ENCODE measurements at regions of chr11 and their contacts with region 1.

Region 1: DNA sequence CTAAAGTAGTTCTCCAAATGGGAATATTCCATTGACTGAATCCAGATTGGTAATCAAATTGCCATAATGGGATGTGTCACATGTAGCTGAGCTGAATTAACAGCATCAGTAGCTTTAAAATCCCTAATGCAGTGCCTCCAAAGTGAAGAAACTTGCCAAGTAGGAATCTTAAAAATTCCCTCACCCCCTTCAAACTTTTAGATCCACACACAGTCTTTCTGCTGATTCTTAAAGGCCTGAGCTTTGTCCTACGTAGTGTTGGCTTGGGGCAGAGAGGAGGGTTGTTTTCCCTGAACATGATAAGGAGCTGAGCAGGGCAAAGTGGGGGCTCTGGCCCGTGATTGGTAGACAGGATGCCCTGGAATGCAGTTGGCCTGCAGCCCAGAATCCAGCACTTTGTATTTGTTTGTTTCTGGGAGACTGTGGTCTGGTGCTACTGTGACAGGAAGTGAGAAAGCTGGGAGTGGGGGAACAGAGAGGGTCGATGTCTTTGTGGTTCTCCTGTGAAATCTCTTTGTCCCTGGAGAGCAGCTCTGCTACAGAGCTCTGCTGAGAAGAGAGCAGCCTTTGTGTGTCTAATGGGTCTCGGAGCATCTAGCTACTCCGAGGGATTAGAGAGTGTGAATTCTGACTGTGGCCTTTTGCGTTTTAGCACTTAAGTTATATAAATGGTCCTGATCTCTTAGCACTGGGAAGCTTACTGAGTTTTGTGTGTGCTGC is 16.9 kb downstream of the CTNND1 start:
- DNase-seq: peak; percentile 86 to 88
- ATAC-seq: peak; percentile 65 to 81 (median 78)
- H3K4me3 ChIP-seq: peak overlapping the region; percentile 38
- H3K27ac ChIP-seq: peak overlapping the region; percentile 75
- H3K4me1 ChIP-seq: peaks cover 82% of the 10 kb centered on the region
- H3K27me3 ChIP-seq: no peaks in the 10 kb centered on the region
- CTCF ChIP-seq: no peak

Region 2: DNA sequence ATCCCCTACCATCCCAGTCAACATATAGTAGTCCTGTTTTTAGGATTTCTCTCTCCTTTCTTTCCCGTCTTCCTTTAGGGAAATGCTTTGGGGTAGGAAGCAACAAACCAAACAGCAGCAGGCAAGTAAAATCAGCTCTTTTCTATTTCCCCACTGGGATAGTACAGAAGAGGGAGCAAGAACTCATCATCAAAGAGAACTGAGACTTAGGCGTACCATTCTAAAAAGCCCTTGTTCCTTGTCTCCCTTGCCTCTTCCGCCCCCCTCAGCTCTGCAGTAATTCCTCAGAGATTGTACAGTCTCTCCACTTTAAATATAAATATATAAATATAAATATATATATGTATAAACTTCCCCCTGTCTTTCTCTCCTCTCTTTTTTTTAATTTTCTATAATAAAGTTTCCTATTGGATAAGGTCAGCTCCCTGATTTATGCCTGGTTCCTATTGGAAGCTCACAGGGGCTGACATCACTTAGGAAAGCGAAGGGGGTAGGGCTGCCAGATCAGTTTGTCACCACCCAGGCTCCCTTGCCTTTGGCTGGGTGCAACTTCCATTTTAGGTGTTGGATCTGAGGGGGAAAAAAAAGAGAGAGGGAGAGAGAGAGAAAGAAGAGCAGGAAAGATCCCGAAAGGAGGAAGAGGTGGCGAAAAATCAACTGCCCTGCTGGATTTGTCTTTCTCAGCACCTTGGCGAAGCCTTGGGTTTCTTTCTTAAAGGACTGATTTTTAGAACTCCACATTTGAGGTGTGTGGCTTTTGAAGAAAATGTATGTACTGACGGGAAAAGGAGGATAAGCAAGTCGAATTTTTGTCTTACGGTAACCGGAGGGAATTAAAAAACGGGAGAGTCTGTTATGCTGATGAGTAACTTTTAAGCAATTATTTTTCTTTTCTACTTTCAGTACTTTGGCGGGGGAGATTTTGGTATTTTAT is 16.9 kb before region 1 on chr11 and contains the start of gene CTNND1:
- intact Hi-C with region 1: loop called in 1 of 2 experiments (anchors 2 kb)
- DNase-seq: peak; percentile 80 to 91
- ATAC-seq: peak; percentile 99 to 100 (median 100)
- H3K4me3 ChIP-seq: peak within 1 kb of the TSS; percentile 83
- H3K27ac ChIP-seq: peak within 1 kb of the TSS; percentile 93
- H3K4me1 ChIP-seq: peaks cover 30% of the 10 kb centered on the region
- H3K27me3 ChIP-seq: no peaks in the 10 kb centered on the region
- CTCF ChIP-seq: no peak
- total RNA-seq, gene CTNND1: 26.1 to 35.2 (median 30.1) TPM